PC-3 (cell line): ENCODE measurements at regions of chr12 and their contacts with region 1.

Region 1: DNA sequence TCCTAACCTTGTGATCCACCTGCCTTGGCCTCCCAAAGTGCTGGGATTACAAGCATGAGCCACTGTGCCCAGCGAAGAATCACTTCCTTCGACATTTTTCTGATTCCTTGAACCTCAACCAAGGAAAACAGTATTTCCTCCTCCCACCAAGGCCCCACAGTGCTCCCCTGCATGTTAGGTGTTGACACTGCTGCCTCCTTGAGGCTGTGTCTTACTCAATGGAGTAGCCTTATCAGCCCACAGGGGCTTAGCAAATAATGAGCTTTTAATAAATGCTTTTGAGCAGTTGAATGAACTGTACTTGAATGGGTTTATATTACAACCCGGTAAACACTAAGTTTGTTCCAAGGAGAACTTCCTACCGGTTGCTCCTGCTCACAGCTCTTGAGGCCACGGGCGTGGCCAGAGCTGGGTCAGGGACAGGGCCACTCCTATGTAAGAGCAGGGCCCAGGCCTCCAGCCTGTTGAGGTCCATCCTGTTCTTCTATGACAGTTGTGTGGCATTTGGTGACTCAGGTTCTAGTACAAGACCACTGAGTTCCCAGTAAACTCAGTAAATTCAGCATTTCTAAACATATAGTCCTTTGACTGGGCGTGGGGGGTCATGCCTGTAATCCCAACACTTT is 36.8 kb upstream of the TUBA1A start:
- DNase-seq: peak; percentile 47
- ATAC-seq: peak; percentile 38; the same call in 1 of the 2 replicates
- H3K4me3 ChIP-seq: no peak overlapping the region
- H3K27ac ChIP-seq: no peak overlapping the region
- H3K4me1 ChIP-seq: peaks cover 7% of the 10 kb centered on the region; the same call in 1 of the 2 replicates
- H3K27me3 ChIP-seq: no peaks in the 10 kb centered on the region
- CTCF ChIP-seq: no peak

Region 2: DNA sequence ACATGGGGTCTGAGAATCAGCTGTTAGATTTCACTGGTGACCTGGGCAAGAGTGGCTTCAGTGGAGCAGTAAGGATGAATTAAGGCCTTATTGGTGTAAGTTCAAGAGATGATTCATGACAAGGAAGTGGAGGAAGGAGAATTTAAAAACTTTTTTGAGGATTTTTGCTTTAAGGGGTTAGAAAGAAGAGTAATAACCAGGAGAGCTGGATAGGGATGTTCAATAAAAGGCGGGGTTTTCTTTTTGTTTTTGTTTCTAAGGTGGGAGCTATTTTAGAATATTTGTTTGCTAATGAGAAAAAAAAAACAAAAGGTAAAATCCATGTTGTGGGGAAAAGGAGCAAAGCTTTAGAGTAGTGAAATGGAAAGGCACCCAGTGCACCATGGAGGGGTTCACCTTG is 79.3 kb before region 1 on chr12:
- CTCF ChIA-PET with region 1: no interaction called
- POLR2A ChIA-PET with region 1: no interaction called
- intact Hi-C with region 1: no loop called
- DNase-seq: no peak
- ATAC-seq: no peak
- H3K4me3 ChIP-seq: no peak overlapping the region
- H3K27ac ChIP-seq: no peak overlapping the region
- H3K4me1 ChIP-seq: no peaks in the 10 kb centered on the region
- H3K27me3 ChIP-seq: no peaks in the 10 kb centered on the region
- CTCF ChIP-seq: no peak

Region 3: DNA sequence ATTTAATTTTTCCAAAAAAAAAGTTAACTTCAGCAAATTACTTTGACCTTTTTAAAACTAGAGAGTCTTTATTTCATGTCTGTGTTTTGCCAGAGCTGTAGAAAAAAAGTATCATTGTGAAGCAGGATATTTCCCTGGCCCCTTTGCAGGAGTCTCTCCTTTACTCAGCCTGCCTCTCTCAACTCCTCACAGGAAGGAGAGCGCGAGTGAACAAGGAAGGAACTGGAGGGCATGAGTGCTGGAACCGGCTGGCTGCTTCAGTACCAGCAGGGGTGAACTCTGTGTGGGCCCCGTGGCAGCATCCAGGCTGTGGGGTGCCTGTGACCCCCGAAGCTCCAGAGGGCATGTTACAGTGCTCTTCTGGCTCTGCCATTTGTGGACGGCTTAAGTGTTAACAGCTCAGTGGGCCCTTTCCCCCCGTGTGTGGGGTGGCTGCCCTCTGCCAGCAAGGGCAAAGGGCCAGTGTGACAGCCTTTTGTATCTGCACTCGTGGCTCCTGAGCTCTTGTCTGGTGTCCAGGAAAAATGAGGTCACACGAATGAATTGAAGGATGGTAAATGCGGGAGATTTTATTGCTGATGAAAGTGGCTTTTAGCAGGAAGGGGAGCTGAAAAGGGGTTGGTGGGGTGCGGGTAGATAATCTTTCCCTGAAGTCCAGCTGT is 236.5 kb after region 1 on chr12:
- CTCF ChIA-PET with region 1: interaction called, 12 read pairs
- POLR2A ChIA-PET with region 1: no interaction called
- intact Hi-C with region 1: no loop called
- DNase-seq: no peak
- ATAC-seq: no peak
- H3K4me3 ChIP-seq: no peak overlapping the region
- H3K27ac ChIP-seq: no peak overlapping the region
- H3K4me1 ChIP-seq: no peaks in the 10 kb centered on the region
- H3K27me3 ChIP-seq: no peaks in the 10 kb centered on the region
- CTCF ChIP-seq: no peak